Heart left ventricle (tissue), 16 donors: ENCODE measurements at regions of chr3 and their contacts with region 1.

Region 1: GRCh38 chr3:151787626-151788025 is 26.3 kb upstream of the AADAC start:
- DNase-seq: no peak
- ATAC-seq: peak in 2 of 4 donors; percentile 59 to 81
- H3K4me3 ChIP-seq: no peak overlapping the region
- H3K27ac ChIP-seq: no peak overlapping the region
- H3K4me1 ChIP-seq: no peaks in the 10 kb centered on the region
- H3K27me3 ChIP-seq: no peaks in the 10 kb centered on the region
- CTCF ChIP-seq: no peak
- POLR2A ChIP-seq: no peak

Region 2: GRCh38 chr3:151903501-151903991 is 115.9 kb after region 1 on chr3:
- intact Hi-C with region 1: loop called in 1 of 10 experiments (anchors 5 kb)
- DNase-seq: no peak
- ATAC-seq: peak in 3 of 4 donors; percentile 48 to 68 (median 62)
- H3K4me3 ChIP-seq: no peak overlapping the region
- H3K27ac ChIP-seq: peak overlapping the region in 8 of 12 donors; percentile 1 to 71 (median 52)
- H3K4me1 ChIP-seq: peaks cover 0 to 48% (median 39%) of the 10 kb centered on the region in 12 donors
- H3K27me3 ChIP-seq: no peaks in the 10 kb centered on the region
- CTCF ChIP-seq: no peak
- POLR2A ChIP-seq: no peak

Region 3: GRCh38 chr3:152444029-152444641 is 656.5 kb after region 1 on chr3:
- intact Hi-C with region 1: no loop called
- DNase-seq: no peak
- ATAC-seq: peak in 3 of 4 donors; percentile 48 to 68 (median 65)
- H3K4me3 ChIP-seq: no peak overlapping the region
- H3K27ac ChIP-seq: peak overlapping the region in 7 of 12 donors; percentile 7 to 45 (median 26)
- H3K4me1 ChIP-seq: peaks cover 0 to 78% (median 42%) of the 10 kb centered on the region in 12 donors
- H3K27me3 ChIP-seq: no peaks in the 10 kb centered on the region
- CTCF ChIP-seq: peak; percentile 52 to 80 (median 76)
- POLR2A ChIP-seq: no peak